Sciatic nerve (tissue), 2 donors: ENCODE measurements at regions of chr12 and their contacts with region 1.

Region 1: GRCh38 chr12:15584366-15585041 is 204.7 kb downstream of the EPS8 start:
- DNase-seq: no peak
- ATAC-seq: peak; percentile 61

Region 2: DNA sequence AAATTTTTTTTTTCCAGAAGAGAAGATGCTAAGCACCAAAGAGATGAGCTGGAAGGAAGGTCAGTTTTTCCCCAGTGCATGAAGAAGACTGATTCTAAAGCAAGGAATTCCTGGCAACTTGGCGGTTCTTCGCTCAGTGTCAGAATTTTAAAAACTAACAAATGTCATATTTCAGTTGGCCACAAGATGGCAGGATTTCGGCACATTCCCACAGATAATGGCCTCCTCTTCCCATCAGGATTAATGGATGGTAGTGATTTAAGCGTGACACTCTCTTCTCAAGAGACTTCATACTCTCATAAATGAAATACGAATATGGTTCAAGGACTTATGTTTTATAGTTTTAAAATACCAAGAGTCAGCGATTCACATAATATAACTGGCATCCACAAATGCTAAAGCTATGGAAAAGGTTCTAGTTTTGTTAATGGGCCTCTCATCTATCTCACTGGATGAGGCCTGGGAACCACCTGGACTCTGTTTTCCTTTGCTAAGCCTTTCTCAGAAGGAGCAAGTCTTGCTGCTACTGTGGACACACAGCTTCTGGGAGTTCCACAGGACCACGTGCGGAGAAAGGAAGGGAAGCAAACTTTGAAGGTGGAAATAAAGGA is 308.3 kb before region 1 on chr12:
- intact Hi-C with region 1: loop called (anchors 10 kb)
- DNase-seq: no peak
- ATAC-seq: peak; percentile 70